ENCODE measurements at regions of chr6 and their contacts with region 1.

Region 1: GRCh38 chr6:85593438-85594196 is at the start of gene SNX14:
- DNase-seq: peak; percentile 59 to 81 (median 73)
- ATAC-seq: peak; percentile 81
- H3K4me3 ChIP-seq: peak within 1 kb of the TSS; percentile 91
- H3K4me3 Mint-ChIP-seq: peak within 1 kb of the TSS; percentile 88 to 98 (median 96)
- H3K27ac ChIP-seq: peak within 1 kb of the TSS; percentile 86
- H3K27ac Mint-ChIP-seq: peak within 1 kb of the TSS; percentile 81 to 97 (median 93)
- H3K4me1 ChIP-seq: peaks cover 5 to 21% of the 10 kb centered on the region in 2 donors
- H3K4me1 Mint-ChIP-seq: peaks cover 29 to 58% (median 47%) of the 10 kb centered on the region in 7 donors
- H3K27me3 ChIP-seq: no peaks in the 10 kb centered on the region
- H3K27me3 Mint-ChIP-seq: peaks cover 0 to 9% (median 0%) of the 10 kb centered on the region in 5 donors
- total RNA-seq, gene SNX14: 37.3 to 71.8 (median 53.3) TPM

Region 2: DNA sequence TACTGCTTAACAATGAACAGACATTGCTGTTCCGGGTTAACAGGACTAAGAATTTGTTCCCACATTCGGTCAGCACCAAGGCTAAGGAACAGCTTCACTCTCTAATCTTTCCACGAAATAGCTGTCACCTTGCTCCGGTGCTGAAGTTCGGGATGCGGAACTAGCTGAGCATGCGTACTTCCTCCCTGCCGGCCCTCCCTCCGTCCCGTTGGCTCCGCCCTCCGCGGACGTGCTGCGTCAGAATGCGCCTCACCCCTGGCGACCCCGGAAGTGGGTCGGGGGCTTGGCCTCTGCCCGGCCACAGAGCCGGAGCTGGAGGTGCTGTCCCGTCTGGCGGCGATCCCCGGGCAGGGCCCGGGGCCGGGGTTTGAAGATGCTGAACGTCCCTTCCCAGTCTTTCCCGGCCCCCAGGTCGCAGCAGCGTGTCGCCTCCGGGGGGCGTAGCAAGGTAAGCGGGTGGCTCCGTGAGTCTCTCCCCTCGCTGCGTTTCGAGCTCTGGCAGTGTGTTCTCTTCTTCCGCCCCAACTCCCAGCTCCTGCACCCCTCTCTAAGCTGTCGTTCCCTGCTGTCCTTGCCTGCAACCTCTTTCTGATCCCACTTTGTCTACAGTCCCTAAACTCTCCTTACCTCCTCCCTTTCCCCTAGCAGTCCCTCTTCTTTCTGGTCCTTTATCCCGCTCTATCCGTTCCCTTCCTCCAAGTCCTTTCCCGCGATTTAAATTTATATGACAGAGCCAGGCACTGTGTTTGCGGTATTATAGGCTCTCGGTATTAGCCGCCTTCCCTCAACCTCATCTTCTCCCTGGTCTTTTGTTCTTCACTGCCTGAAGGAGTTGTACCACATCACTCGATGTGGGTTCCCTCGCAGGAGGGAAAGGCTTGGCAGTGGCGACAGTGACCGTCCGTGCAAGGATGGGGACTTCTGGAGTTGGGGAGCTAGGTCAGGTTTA is 1733.9 kb before region 1 on chr6 and contains the start of gene CYB5R4:
- CTCF ChIA-PET with region 1: no interaction called
- POLR2A ChIA-PET with region 1: no interaction called
- intact Hi-C with region 1: loop called in 1 of 2 experiments (anchors 1 kb)
- DNase-seq: peak; percentile 88 to 95 (median 94)
- ATAC-seq: peak; percentile 98
- H3K4me3 ChIP-seq: peak within 1 kb of the TSS; percentile 92
- H3K4me3 Mint-ChIP-seq: peak within 1 kb of the TSS; percentile 87 to 100 (median 98)
- H3K27ac ChIP-seq: peak within 1 kb of the TSS; percentile 82
- H3K27ac Mint-ChIP-seq: peak within 1 kb of the TSS; percentile 85 to 96 (median 91)
- H3K4me1 ChIP-seq: peaks cover 14 to 21% of the 10 kb centered on the region in 2 donors
- H3K4me1 Mint-ChIP-seq: peaks cover 23 to 47% (median 37%) of the 10 kb centered on the region in 7 donors
- H3K27me3 ChIP-seq: no peaks in the 10 kb centered on the region
- H3K27me3 Mint-ChIP-seq: peaks cover 8 to 18% (median 16%) of the 10 kb centered on the region in 5 donors
- total RNA-seq, gene CYB5R4: 17.8 to 38.6 (median 21.0) TPM

Region 3: DNA sequence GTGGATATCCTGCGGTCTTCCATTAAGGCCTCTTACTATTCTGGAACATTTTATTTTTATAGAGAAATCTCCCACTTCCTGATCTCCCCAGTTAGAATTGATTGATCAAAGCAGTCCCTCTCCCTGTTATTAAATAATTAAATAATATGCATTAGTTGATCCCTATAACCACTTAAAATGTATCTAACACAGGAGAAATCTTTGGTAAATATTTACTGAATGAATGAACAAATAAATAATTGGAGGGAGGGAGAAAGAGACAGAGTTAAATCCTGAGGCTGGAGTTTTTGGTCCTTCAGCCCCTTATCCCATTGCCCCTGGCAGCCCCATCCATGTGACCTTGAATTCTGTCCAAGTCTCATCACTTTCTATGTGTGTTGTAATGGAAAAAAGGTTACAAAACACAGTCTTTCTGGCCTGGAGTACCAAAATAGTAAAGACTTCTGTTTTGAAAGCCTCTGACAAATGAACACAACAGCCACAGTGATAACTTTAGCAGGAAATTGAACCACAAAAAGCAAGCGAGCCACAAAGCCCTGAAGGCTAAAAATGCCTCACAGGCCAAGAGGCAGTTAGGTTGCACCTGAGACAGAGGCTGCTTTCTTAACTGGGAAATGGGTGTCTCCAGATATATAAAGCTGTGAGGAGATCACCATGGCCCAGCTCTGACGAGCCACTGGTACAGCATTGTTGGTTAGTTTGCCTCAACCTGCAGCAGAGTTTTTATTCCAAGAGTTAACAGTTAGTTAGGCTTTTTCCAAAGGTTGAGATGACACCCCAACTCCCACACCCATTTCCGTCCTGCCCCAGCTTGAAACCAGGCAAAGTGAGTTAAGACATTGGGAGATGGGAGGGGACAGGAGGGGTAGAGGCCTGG is 132.5 kb before region 1 on chr6:
- CTCF ChIA-PET with region 1: no interaction called
- POLR2A ChIA-PET with region 1: interaction called, 3 read pairs
- intact Hi-C with region 1: loop called in 1 of 2 experiments (anchors 5 kb)
- DNase-seq: peak in 6 of 9 donors; percentile 17 to 53 (median 46)
- ATAC-seq: peak; percentile 54
- H3K4me3 ChIP-seq: no peak overlapping the region
- H3K4me3 Mint-ChIP-seq: peak overlapping the region in 7 of 10 donors; percentile 32 to 72 (median 68)
- H3K27ac ChIP-seq: no peak overlapping the region
- H3K27ac Mint-ChIP-seq: peak overlapping the region in 8 of 9 donors; percentile 38 to 92 (median 71)
- H3K4me1 ChIP-seq: peaks cover 9 to 25% of the 10 kb centered on the region in 2 donors
- H3K4me1 Mint-ChIP-seq: peaks cover 23 to 95% (median 63%) of the 10 kb centered on the region in 7 donors
- H3K27me3 ChIP-seq: no peaks in the 10 kb centered on the region
- H3K27me3 Mint-ChIP-seq: peaks cover 0 to 30% (median 28%) of the 10 kb centered on the region in 5 donors

Region 4: DNA sequence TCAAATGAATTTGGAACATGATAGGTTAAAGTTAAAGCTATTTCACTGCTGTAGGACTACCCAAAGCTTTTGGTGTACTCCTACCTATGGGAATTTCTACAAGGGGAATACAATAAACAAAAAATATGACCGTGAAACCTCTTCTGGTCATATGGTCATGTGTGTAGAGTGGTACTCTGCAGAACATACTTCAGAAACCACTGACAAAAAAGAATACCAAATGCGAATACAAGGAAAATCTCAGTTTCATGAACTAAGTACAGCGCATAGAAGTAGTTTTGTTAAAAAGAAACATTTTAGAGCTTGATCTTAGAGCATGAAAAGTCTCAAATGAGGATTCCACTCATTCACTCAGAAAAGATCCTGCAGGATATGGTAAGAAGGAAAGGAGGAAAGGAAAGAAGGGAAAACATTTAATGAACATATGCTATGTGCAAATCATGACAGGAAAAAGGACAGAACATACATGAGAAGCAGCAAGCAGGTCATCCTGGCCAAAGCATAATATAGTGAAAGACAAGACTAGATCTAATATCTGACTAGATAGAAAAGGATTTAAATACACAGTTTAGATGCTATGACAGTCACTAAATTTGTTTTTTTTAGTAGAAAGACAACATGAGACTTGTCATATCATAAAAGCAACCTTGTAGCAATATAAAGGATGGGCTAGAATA is 36.5 kb before region 1 on chr6:
- CTCF ChIA-PET with region 1: no interaction called
- POLR2A ChIA-PET with region 1: no interaction called
- intact Hi-C with region 1: loop called in 1 of 2 experiments (anchors 5 kb)
- DNase-seq: no peak
- ATAC-seq: no peak
- H3K4me3 ChIP-seq: no peak overlapping the region
- H3K4me3 Mint-ChIP-seq: no peak overlapping the region
- H3K27ac ChIP-seq: no peak overlapping the region
- H3K27ac Mint-ChIP-seq: peak overlapping the region in 2 of 9 donors; percentile 1 to 79
- H3K4me1 ChIP-seq: no peaks in the 10 kb centered on the region
- H3K4me1 Mint-ChIP-seq: peaks cover 0 to 3% (median 0%) of the 10 kb centered on the region in 7 donors
- H3K27me3 ChIP-seq: no peaks in the 10 kb centered on the region
- H3K27me3 Mint-ChIP-seq: no peaks in the 10 kb centered on the region

Region 5: GRCh38 chr6:85612690-85613474 is 19.3 kb after region 1 on chr6:
- CTCF ChIA-PET with region 1: no interaction called
- POLR2A ChIA-PET with region 1: interaction called, 11 read pairs
- intact Hi-C with region 1: loop called in 1 of 2 experiments (anchors 1 kb)
- DNase-seq: no peak
- ATAC-seq: no peak
- H3K4me3 ChIP-seq: no peak overlapping the region
- H3K4me3 Mint-ChIP-seq: no peak overlapping the region
- H3K27ac ChIP-seq: no peak overlapping the region
- H3K27ac Mint-ChIP-seq: peak overlapping the region in 3 of 9 donors; percentile 19 to 61 (median 40)
- H3K4me1 ChIP-seq: no peaks in the 10 kb centered on the region
- H3K4me1 Mint-ChIP-seq: peaks cover 0 to 16% (median 12%) of the 10 kb centered on the region in 7 donors
- H3K27me3 ChIP-seq: no peaks in the 10 kb centered on the region
- H3K27me3 Mint-ChIP-seq: no peaks in the 10 kb centered on the region

Region 6: GRCh38 chr6:85669735-85670194 is 76.1 kb after region 1 on chr6:
- CTCF ChIA-PET with region 1: no interaction called
- POLR2A ChIA-PET with region 1: interaction called, 11 read pairs
- intact Hi-C with region 1: no loop called
- DNase-seq: peak in 8 of 9 donors; percentile 24 to 64 (median 50)
- ATAC-seq: peak; percentile 95
- H3K4me3 ChIP-seq: no peak overlapping the region
- H3K4me3 Mint-ChIP-seq: peak overlapping the region; percentile 52 to 80 (median 70)
- H3K27ac ChIP-seq: peak overlapping the region; percentile 46
- H3K27ac Mint-ChIP-seq: peak overlapping the region; percentile 80 to 95 (median 91)
- H3K4me1 ChIP-seq: peaks cover 24 to 32% of the 10 kb centered on the region in 2 donors
- H3K4me1 Mint-ChIP-seq: peaks cover 34 to 61% (median 56%) of the 10 kb centered on the region in 7 donors
- H3K27me3 ChIP-seq: no peaks in the 10 kb centered on the region
- H3K27me3 Mint-ChIP-seq: no peaks in the 10 kb centered on the region

Region 7: GRCh38 chr6:87472525-87473418 is 1879.2 kb after region 1 on chr6 and contains the start of gene SLC35A1:
- CTCF ChIA-PET with region 1: no interaction called
- POLR2A ChIA-PET with region 1: no interaction called
- intact Hi-C with region 1: loop called in 1 of 2 experiments (anchors 10 kb)
- DNase-seq: peak; percentile 78 to 92 (median 87)
- ATAC-seq: peak; percentile 97
- H3K4me3 ChIP-seq: peak within 1 kb of the TSS; percentile 81
- H3K4me3 Mint-ChIP-seq: peak within 1 kb of the TSS; percentile 88 to 99 (median 98)
- H3K27ac ChIP-seq: peak within 1 kb of the TSS; percentile 93
- H3K27ac Mint-ChIP-seq: peak within 1 kb of the TSS; percentile 95 to 100 (median 99)
- H3K4me1 ChIP-seq: peaks cover 9 to 11% of the 10 kb centered on the region in 2 donors
- H3K4me1 Mint-ChIP-seq: peaks cover 14 to 31% (median 20%) of the 10 kb centered on the region in 7 donors
- H3K27me3 ChIP-seq: no peaks in the 10 kb centered on the region
- H3K27me3 Mint-ChIP-seq: peaks cover 2 to 14% (median 9%) of the 10 kb centered on the region in 5 donors
- total RNA-seq, gene SLC35A1: 10.4 to 23.4 (median 15.6) TPM